ENCODE measurements at regions of chr7 and their contacts with region 1.

Region 1: DNA sequence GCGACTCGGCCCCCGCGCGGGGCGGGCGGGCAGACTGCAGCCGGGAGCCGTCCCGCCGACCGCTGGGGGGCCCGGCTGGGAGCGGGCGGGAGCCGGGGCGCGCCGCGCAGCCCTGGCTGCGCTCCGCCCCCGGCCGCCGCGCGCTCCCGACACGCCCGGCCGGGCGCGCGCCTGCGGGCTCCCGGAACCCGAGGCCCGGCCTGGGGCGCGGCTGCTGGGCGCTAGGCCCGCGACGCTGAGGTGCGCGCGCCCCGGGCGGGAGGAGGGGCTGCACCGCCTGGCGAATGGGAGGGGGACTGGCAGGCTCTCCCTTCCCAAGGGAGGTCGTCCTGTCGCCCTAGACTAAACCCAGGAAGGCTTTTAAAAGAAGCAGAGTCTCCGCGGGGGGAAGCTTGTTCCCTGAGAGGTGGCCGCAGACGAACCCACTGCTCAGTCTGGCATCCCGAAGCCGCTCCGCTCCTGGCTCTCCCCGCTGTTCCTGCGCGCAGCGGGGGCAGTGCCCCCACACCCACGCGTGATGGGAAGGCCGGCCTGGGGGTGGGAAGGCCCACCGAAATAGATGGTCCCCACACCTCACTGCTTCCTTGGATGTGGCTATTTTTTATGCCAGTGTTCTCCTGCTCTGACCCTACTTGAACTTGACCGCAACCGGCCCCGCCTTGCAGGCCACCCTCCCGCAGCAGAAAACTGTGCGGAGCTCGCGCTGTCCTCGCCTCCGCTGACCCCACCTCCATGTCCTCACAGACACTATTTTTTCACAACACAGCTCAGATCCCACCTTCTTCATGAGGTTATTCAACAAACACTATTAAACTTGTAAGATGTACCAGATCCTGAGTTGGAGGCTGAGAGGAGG is at the start of gene VOPP1:
- DNase-seq: peak; percentile 66
- H3K4me3 Mint-ChIP-seq: peak within 1 kb of the TSS; percentile 89
- H3K27ac Mint-ChIP-seq: peak within 1 kb of the TSS; percentile 93
- H3K4me1 Mint-ChIP-seq: peaks cover 67% of the 10 kb centered on the region
- H3K27me3 Mint-ChIP-seq: no peaks in the 10 kb centered on the region
- total RNA-seq, gene VOPP1: 64.9 to 67.2 TPM

Region 2: GRCh38 chr7:54995631-54996340 is 576.8 kb before region 1 on chr7:
- CTCF ChIA-PET with region 1: no interaction called
- POLR2A ChIA-PET with region 1: no interaction called
- intact Hi-C with region 1: loop called (anchors 5 kb)
- DNase-seq: peak; percentile 50
- H3K4me3 Mint-ChIP-seq: no peak overlapping the region
- H3K27ac Mint-ChIP-seq: peak overlapping the region; percentile 65
- H3K4me1 Mint-ChIP-seq: peaks cover 29% of the 10 kb centered on the region
- H3K27me3 Mint-ChIP-seq: peaks cover 7% of the 10 kb centered on the region

Region 3: DNA sequence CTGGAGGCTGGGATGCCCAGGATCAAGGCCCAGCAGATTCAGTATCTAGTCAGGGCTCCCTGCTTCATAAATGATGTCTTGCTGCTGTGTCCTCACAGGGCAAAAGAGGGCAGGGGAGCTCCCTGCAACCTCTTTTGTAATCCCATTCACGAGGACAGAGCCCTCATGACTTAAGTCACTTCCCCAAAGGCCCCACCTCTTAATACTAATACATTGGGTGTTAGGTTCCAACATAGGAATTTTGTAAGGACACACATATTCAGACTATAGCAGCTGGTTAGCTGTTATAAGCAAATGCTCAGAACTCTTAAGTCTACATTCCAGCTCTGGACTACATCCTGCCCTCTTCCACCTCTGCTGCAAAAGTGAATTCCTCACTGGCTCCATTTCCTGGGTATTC is 63.3 kb before region 1 on chr7:
- CTCF ChIA-PET with region 1: no interaction called
- POLR2A ChIA-PET with region 1: interaction called, 22 read pairs
- intact Hi-C with region 1: loop called (anchors 1 kb)
- DNase-seq: no peak
- H3K4me3 Mint-ChIP-seq: no peak overlapping the region
- H3K27ac Mint-ChIP-seq: peak overlapping the region; percentile 45
- H3K4me1 Mint-ChIP-seq: peaks cover 79% of the 10 kb centered on the region
- H3K27me3 Mint-ChIP-seq: no peaks in the 10 kb centered on the region

Region 4: GRCh38 chr7:55557666-55558188 is 14.9 kb before region 1 on chr7:
- CTCF ChIA-PET with region 1: interaction called, 8 read pairs
- POLR2A ChIA-PET with region 1: interaction called, 6 read pairs
- intact Hi-C with region 1: loop called (anchors 1 kb)
- DNase-seq: peak; percentile 62
- H3K4me3 Mint-ChIP-seq: peak overlapping the region; percentile 13
- H3K27ac Mint-ChIP-seq: peak overlapping the region; percentile 74
- H3K4me1 Mint-ChIP-seq: peaks cover 93% of the 10 kb centered on the region
- H3K27me3 Mint-ChIP-seq: no peaks in the 10 kb centered on the region

Region 5: GRCh38 chr7:56063882-56064625 is 491.4 kb after region 1 on chr7 and contains the start of gene SUMF2:
- CTCF ChIA-PET with region 1: no interaction called
- POLR2A ChIA-PET with region 1: no interaction called
- intact Hi-C with region 1: loop called (anchors 5 kb)
- DNase-seq: peak; percentile 92
- H3K4me3 Mint-ChIP-seq: peak within 1 kb of the TSS; percentile 87
- H3K27ac Mint-ChIP-seq: peak within 1 kb of the TSS; percentile 86
- H3K4me1 Mint-ChIP-seq: peaks cover 40% of the 10 kb centered on the region
- H3K27me3 Mint-ChIP-seq: peaks cover 1% of the 10 kb centered on the region
- total RNA-seq, gene SUMF2: 130 to 133 TPM

Measured in activated CD4-positive, alpha-beta memory T cell treated with anti-CD3 and anti-CD28 coated beads for 36 hours (primary cell).